ENCODE measurements at regions of chr3 and their contacts with region 1.

Region 1: GRCh38 chr3:76500746-76501275 is 539.1 kb upstream of the ROBO2 start:
- DNase-seq: no peak
- ATAC-seq: no peak
- H3K4me3 ChIP-seq: no peak overlapping the region
- H3K27ac ChIP-seq: no peak overlapping the region
- H3K4me1 ChIP-seq: no peaks in the 10 kb centered on the region
- H3K27me3 ChIP-seq: no peaks in the 10 kb centered on the region
- CTCF ChIP-seq: no peak
- POLR2A ChIP-seq: no peak

Region 2: DNA sequence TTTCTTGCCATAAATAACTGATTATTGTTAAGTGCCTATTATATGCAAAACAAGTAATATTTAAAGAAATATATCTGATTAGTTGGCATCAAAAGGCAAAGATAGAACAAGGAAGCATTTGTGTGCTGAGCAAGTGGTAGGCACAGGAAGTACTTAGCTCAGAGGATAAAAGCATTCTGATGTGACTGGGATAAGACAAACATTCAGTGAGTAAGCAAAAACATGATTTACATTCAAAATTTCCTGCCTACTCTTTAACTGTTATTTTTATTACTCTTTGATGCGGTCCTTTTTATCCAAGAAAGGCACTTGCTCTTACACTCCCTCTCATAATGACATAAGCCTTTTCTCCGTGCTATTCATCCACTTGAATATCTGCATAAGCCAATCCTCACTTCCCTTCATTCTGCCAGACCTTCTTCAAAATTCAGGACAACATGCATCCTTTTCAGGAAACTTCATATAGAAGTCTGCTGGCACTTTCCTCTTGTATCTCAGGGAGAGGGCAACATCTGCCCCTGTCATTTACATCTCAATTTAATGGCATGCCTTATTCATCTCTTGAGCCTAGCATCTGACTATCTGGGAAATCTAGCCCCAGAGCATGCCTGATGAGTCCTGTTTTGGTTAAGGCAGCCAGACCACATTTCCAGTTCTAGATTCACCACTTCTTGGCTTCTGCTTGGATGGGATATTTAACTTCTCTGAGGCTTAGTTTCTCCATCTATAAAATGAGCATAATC is 60.9 kb after region 1 on chr3:
- intact Hi-C with region 1: loop called in 1 of 10 experiments (anchors 10 kb)
- DNase-seq: no peak
- ATAC-seq: no peak
- H3K4me3 ChIP-seq: no peak overlapping the region
- H3K27ac ChIP-seq: no peak overlapping the region
- H3K4me1 ChIP-seq: peaks cover 0 to 6% (median 0%) of the 10 kb centered on the region in 12 donors
- H3K27me3 ChIP-seq: no peaks in the 10 kb centered on the region
- CTCF ChIP-seq: no peak
- POLR2A ChIP-seq: no peak

Region 3: GRCh38 chr3:76715426-76715825 is 214.6 kb after region 1 on chr3:
- intact Hi-C with region 1: no loop called
- DNase-seq: no peak
- ATAC-seq: no peak
- H3K4me3 ChIP-seq: no peak overlapping the region
- H3K27ac ChIP-seq: no peak overlapping the region
- H3K4me1 ChIP-seq: no peaks in the 10 kb centered on the region
- H3K27me3 ChIP-seq: no peaks in the 10 kb centered on the region
- CTCF ChIP-seq: no peak
- POLR2A ChIP-seq: no peak